PC-9 (cell line): ENCODE measurements at regions of chr17 and their contacts with region 1.

Region 1: GRCh38 chr17:59238906-59239305 is 18.6 kb downstream of the GDPD1 start:
- DNase-seq: no peak
- H3K4me3 ChIP-seq: no peak overlapping the region
- H3K27ac ChIP-seq: no peak overlapping the region
- H3K4me1 ChIP-seq: no peaks in the 10 kb centered on the region
- H3K27me3 ChIP-seq: no peaks in the 10 kb centered on the region
- CTCF ChIP-seq: no peak

Region 2: DNA sequence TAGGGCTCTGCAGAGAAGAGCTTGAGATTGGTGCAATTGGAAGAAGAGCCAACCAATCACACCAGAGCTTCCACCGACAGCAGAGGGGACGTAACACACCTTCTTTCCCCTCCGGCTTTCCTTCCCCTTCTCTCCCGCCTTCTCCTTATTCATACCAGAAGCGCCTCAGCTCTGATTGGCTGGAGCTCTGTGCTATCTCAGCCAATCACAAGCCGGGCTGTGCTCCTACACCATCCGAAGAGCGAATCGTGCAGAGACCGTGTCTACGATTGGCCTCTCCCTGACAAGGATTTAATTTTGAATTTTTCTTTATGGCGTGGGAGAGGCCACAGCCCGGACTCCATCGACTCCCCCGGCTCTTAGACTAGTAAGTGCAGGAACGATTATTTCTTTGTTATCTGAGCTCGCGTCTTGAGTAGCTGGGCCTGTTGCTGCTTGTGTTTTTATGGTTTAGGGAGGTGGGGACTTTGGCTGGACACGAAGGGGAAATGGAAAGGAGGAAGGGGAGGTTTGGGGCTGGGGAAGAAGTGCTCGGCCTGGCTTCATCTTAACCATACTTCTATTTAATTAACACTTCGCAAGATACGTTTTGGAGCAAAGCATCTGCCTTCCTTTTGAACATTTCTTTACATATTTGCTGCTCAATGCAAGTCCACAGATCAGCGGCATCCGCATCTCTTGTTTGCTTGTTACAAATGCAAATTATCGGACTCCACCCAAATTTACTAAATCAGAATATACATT is 83.3 kb before region 1 on chr17 and contains the start of gene PRR11:
- CTCF ChIA-PET with region 1: no interaction called
- POLR2A ChIA-PET with region 1: no interaction called
- intact Hi-C with region 1: no loop called
- DNase-seq: peak; percentile 94 to 100
- H3K4me3 ChIP-seq: peak within 1 kb of the TSS; percentile 80
- H3K27ac ChIP-seq: peak within 1 kb of the TSS; percentile 71
- H3K4me1 ChIP-seq: peaks cover 50% of the 10 kb centered on the region
- H3K27me3 ChIP-seq: no peaks in the 10 kb centered on the region
- CTCF ChIP-seq: no peak
- total RNA-seq, gene PRR11: 87.9 and 109 TPM in 2 replicates

Region 3: GRCh38 chr17:59277031-59277430 is 38.1 kb after region 1 on chr17:
- CTCF ChIA-PET with region 1: no interaction called
- POLR2A ChIA-PET with region 1: interaction called, 16 read pairs
- intact Hi-C with region 1: no loop called
- DNase-seq: no peak
- H3K4me3 ChIP-seq: no peak overlapping the region
- H3K27ac ChIP-seq: no peak overlapping the region
- H3K4me1 ChIP-seq: no peaks in the 10 kb centered on the region
- H3K27me3 ChIP-seq: no peaks in the 10 kb centered on the region
- CTCF ChIP-seq: no peak